CD4-positive, alpha-beta T cell (primary cell): ENCODE measurements at regions of chr22 and their contacts with region 1.

Region 1: DNA sequence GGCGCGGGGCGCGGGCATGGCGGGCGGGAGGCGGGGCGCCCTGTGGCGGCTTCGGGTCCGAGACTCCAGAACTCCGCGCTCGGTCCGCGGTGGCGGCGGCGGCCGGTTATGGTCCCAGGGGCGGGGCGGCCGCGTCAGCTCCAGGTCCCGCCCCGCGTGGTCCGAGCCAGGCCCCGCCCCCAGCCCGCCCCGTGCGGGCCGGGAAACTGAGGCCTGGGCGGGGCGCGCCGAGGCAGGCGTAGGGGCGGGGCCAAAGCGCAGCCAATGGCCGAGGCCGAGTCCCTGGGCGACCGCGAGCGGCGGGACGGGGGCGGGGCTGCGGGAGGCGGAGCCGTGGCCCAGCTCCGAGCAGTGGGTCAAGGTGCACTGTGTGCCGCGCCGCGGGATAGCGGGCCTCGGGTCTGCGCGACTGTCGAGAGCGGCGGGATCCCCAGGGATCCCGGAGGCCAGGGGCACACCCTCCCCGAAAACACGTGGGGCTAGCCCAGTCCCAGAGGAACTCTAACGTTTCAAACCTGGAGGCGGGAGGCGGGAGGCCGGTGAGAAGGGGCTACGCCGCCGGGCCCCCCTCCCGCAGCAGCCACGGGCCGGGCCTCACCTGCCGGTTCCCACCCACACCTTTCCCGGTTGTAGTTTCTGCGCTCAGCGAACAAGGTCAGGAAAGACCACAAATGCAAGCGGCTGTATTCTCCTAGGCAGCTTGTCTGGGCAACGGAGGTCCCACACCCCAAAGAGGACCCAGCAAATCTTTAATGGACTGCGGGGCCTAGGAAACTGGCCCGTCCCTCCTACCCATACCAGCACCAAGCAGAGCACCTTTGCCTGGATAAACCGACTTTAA is at the start of gene SLC25A1:
- DNase-seq: peak; percentile 26 to 94 (median 74)
- ATAC-seq: peak; percentile 57
- H3K4me3 ChIP-seq: peak within 1 kb of the TSS; percentile 78
- H3K4me3 Mint-ChIP-seq: peak within 1 kb of the TSS; percentile 93
- H3K27ac ChIP-seq: peak within 1 kb of the TSS; percentile 14 to 59
- H3K27ac Mint-ChIP-seq: peak within 1 kb of the TSS; percentile 77
- H3K4me1 ChIP-seq: peaks cover 40% of the 10 kb centered on the region
- H3K4me1 Mint-ChIP-seq: peaks cover 18% of the 10 kb centered on the region
- H3K27me3 ChIP-seq: no peaks in the 10 kb centered on the region
- H3K27me3 Mint-ChIP-seq: no peaks in the 10 kb centered on the region
- CTCF ChIP-seq: no peak
- total RNA-seq, gene SLC25A1: 17.6 to 18.0 TPM

Region 2: DNA sequence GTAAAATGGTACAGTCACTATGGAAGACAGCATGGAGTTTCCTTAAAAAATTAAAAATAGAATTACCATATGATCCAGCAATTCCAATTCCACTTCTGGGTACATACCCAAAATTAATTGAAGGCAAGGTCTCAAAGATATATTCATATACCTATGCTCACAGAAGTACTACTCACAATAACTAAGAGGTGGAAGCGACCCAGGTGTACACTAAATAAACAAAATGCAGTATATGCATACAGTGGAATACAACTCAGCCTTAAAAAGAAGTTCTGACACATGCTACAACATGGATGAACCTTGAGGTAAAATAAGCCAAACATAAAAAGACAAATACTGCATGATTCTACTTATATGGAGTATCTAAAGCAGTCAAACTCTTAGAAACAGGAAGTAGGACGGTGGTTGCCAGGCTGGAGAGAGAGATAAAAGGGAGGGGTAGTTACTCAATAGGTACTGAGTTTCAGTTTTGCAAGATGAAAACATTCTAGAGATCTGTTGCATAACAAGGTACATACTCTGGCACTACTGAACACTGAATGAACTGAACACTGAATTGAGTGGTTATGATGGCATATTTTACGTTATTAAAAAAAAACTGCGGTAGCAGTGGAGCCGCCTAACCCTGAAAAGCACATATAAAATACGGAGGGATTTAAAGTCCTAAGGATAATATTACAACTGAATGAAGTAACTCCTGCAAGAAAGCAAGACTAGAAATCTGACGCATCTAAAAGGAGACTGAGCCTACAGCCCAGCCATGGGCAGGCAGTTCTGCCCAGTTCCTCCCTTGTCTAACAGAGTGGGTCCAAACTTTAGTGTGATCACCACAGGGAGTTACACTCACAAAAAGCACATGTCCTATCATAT is 69.4 kb before region 1 on chr22:
- CTCF ChIA-PET with region 1: no interaction called
- POLR2A ChIA-PET with region 1: interaction called, 4 read pairs
- intact Hi-C with region 1: loop called (anchors 5 kb)
- DNase-seq: peak; percentile 28 to 88 (median 52)
- ATAC-seq: peak; percentile 84
- H3K4me3 ChIP-seq: peak overlapping the region; percentile 40
- H3K4me3 Mint-ChIP-seq: peak overlapping the region; percentile 84
- H3K27ac ChIP-seq: peak overlapping the region; percentile 85 to 90
- H3K27ac Mint-ChIP-seq: peak overlapping the region; percentile 86
- H3K4me1 ChIP-seq: peaks cover 62% of the 10 kb centered on the region
- H3K4me1 Mint-ChIP-seq: peaks cover 75% of the 10 kb centered on the region
- H3K27me3 ChIP-seq: no peaks in the 10 kb centered on the region
- H3K27me3 Mint-ChIP-seq: no peaks in the 10 kb centered on the region
- CTCF ChIP-seq: no peak

Region 3: GRCh38 chr22:19122143-19122751 is 56.6 kb before region 1 on chr22 and contains the start of gene DGCR2:
- CTCF ChIA-PET with region 1: no interaction called
- POLR2A ChIA-PET with region 1: no interaction called
- intact Hi-C with region 1: loop called in 1 of 2 experiments (anchors 2 kb)
- DNase-seq: peak; percentile 95 to 99 (median 96)
- ATAC-seq: peak; percentile 97
- H3K4me3 ChIP-seq: peak within 1 kb of the TSS; percentile 95
- H3K4me3 Mint-ChIP-seq: peak within 1 kb of the TSS; percentile 94
- H3K27ac ChIP-seq: peak within 1 kb of the TSS in 1 of 2 donors; percentile 73
- H3K27ac Mint-ChIP-seq: peak within 1 kb of the TSS; percentile 87
- H3K4me1 ChIP-seq: peaks cover 52% of the 10 kb centered on the region
- H3K4me1 Mint-ChIP-seq: peaks cover 52% of the 10 kb centered on the region
- H3K27me3 ChIP-seq: no peaks in the 10 kb centered on the region
- H3K27me3 Mint-ChIP-seq: no peaks in the 10 kb centered on the region
- CTCF ChIP-seq: no peak
- total RNA-seq, gene DGCR2: 31.9 to 35.5 TPM

Region 4: GRCh38 chr22:19143967-19144400 is 34.9 kb before region 1 on chr22:
- CTCF ChIA-PET with region 1: interaction called, 7 read pairs
- POLR2A ChIA-PET with region 1: interaction called, 13 read pairs
- intact Hi-C with region 1: loop called in 1 of 2 experiments (anchors 2 kb)
- DNase-seq: peak in 7 of 14 experiments; percentile 13 to 66 (median 25)
- ATAC-seq: peak; percentile 16
- H3K4me3 ChIP-seq: peak overlapping the region; percentile 90
- H3K4me3 Mint-ChIP-seq: peak overlapping the region; percentile 97
- H3K27ac ChIP-seq: peak overlapping the region; percentile 81 to 86
- H3K27ac Mint-ChIP-seq: peak overlapping the region; percentile 94
- H3K4me1 ChIP-seq: peaks cover 23% of the 10 kb centered on the region
- H3K4me1 Mint-ChIP-seq: peaks cover 22% of the 10 kb centered on the region
- H3K27me3 ChIP-seq: peaks cover 10 to 16% of the 10 kb centered on the region in 2 experiments
- H3K27me3 Mint-ChIP-seq: peaks cover 16% of the 10 kb centered on the region
- CTCF ChIP-seq: no peak

Region 5: GRCh38 chr22:19291580-19292457 is 112.9 kb after region 1 on chr22 and contains the start of gene CLTCL1:
- CTCF ChIA-PET with region 1: no interaction called
- POLR2A ChIA-PET with region 1: interaction called, 4 read pairs
- intact Hi-C with region 1: loop called in 1 of 2 experiments (anchors 1 kb)
- DNase-seq: peak; percentile 44 to 82 (median 63)
- ATAC-seq: peak; percentile 69
- H3K4me3 ChIP-seq: peak within 1 kb of the TSS; percentile 73
- H3K4me3 Mint-ChIP-seq: peak within 1 kb of the TSS; percentile 91
- H3K27ac ChIP-seq: no peak within 1 kb of the TSS
- H3K27ac Mint-ChIP-seq: peak within 1 kb of the TSS; percentile 67
- H3K4me1 ChIP-seq: peaks cover 21% of the 10 kb centered on the region
- H3K4me1 Mint-ChIP-seq: peaks cover 17% of the 10 kb centered on the region
- H3K27me3 ChIP-seq: peaks cover 0 to 14% of the 10 kb centered on the region in 2 experiments
- H3K27me3 Mint-ChIP-seq: peaks cover 5% of the 10 kb centered on the region
- CTCF ChIP-seq: no peak
- total RNA-seq, gene CLTCL1: 0.52 to 1.5 TPM

Region 6: DNA sequence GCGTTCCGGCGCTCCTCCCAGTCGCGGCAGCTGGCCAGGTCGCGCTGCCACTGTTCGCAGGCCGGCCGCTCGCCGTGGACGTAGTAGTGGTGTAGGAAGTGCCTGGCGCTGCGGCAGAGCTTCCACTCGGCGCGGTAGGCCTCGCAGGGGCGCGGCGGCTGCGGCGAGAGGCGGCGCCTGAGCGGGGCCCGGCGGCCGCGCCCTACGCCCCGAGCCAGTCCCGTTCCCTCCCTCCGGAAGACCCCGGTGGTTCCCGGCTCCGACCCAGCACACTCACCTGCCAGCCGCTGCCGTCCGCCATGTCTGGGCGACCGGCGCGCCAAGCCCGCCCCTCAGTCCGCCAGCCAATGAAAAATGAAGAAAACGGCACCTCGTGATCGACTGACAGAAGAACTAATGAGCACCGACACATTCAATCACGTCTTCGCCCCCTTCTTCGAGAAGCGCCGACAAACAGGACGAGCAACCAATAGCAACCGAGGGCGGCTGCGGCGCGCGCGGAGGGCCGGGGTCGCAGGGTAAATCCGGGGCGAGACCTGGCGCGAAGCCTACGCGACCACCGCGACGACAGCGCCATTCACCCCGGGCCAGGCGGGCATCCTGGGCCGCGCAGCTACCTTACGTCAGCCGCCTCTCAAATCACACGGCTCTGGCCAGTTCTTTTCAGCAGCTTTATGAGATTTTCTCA is 268.7 kb after region 1 on chr22 and contains the start of gene C22orf39:
- CTCF ChIA-PET with region 1: interaction called, 3 read pairs
- POLR2A ChIA-PET with region 1: no interaction called
- intact Hi-C with region 1: loop called in 1 of 2 experiments (anchors 5 kb)
- DNase-seq: peak; percentile 75 to 96 (median 85)
- ATAC-seq: peak; percentile 92
- H3K4me3 ChIP-seq: peak within 1 kb of the TSS; percentile 88
- H3K4me3 Mint-ChIP-seq: peak within 1 kb of the TSS; percentile 93
- H3K27ac ChIP-seq: peak within 1 kb of the TSS; percentile 82 to 85
- H3K27ac Mint-ChIP-seq: peak within 1 kb of the TSS; percentile 91
- H3K4me1 ChIP-seq: peaks cover 38% of the 10 kb centered on the region
- H3K4me1 Mint-ChIP-seq: peaks cover 52% of the 10 kb centered on the region
- H3K27me3 ChIP-seq: no peaks in the 10 kb centered on the region
- H3K27me3 Mint-ChIP-seq: no peaks in the 10 kb centered on the region
- CTCF ChIP-seq: no peak
- total RNA-seq, gene C22orf39: 30.2 to 32.6 TPM

Region 7: GRCh38 chr22:19598054-19598855 is 419.4 kb after region 1 on chr22:
- CTCF ChIA-PET with region 1: no interaction called
- POLR2A ChIA-PET with region 1: no interaction called
- intact Hi-C with region 1: loop called in 1 of 2 experiments (anchors 2 kb)
- DNase-seq: peak in 9 of 14 experiments; percentile 18 to 48 (median 42)
- ATAC-seq: peak; percentile 30
- H3K4me3 ChIP-seq: peak overlapping the region; percentile 0
- H3K4me3 Mint-ChIP-seq: peak overlapping the region; percentile 57
- H3K27ac ChIP-seq: peak overlapping the region; percentile 74 to 87
- H3K27ac Mint-ChIP-seq: peak overlapping the region; percentile 93
- H3K4me1 ChIP-seq: peaks cover 51% of the 10 kb centered on the region
- H3K4me1 Mint-ChIP-seq: peaks cover 76% of the 10 kb centered on the region
- H3K27me3 ChIP-seq: no peaks in the 10 kb centered on the region
- H3K27me3 Mint-ChIP-seq: no peaks in the 10 kb centered on the region
- CTCF ChIP-seq: no peak